Tibial artery (tissue), 4 donors: ENCODE measurements at regions of chr2 and their contacts with region 1.

Region 1: DNA sequence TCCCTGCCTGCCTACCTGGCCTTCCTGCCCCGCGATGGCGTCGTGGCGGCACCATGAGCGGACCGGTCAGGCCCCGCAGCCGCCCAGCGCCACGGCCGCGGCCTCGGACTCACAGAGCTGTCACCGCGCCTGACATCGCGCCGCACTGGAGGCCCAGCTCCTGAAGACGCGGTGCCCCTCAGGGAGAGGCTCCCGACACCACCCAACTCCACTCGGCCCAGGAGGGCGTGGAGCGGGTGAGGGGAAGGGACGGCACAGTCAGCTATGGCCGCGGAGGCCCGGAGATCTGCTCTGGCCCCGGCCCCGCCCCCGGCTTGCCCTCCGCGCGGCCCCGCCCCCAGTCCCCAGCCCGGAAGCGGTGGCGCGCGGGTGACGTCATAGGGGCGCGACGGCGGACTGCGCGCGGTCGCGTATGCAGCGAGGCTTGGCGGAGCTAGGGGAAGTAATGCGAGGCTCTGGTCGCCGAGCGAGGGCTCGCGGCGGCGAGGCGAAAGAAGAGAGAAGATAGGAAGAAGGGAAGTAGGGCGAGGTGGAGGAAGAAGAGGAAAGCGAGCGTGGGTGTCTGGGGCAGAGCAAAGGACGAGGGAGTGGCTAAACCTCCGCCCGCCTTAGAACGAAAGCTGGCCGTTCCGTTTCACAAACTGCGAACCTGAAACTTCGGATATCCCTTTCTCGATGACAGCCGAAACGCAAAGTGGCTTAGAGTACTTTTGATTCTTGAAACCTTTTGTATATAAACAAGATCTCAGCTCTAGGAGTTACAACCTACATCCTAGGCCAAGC is at the start of gene SLC35F5:
- DNase-seq: peak; percentile 88 to 95
- H3K4me3 ChIP-seq: peak within 1 kb of the TSS; percentile 63 to 72
- H3K27ac ChIP-seq: peak within 1 kb of the TSS; percentile 90 to 94
- H3K4me1 ChIP-seq: peaks cover 0 to 42% (median 16%) of the 10 kb centered on the region in 4 donors
- H3K27me3 ChIP-seq: no peaks in the 10 kb centered on the region
- CTCF ChIP-seq: no peak

Region 2: GRCh38 chr2:113692698-113693428 is 63.7 kb before region 1 on chr2:
- intact Hi-C with region 1: no loop called
- DNase-seq: no peak
- H3K4me3 ChIP-seq: no peak overlapping the region
- H3K27ac ChIP-seq: no peak overlapping the region
- H3K4me1 ChIP-seq: no peaks in the 10 kb centered on the region
- H3K27me3 ChIP-seq: no peaks in the 10 kb centered on the region
- CTCF ChIP-seq: no peak

Region 3: GRCh38 chr2:113784823-113785744 is 28.5 kb after region 1 on chr2:
- intact Hi-C with region 1: no loop called
- DNase-seq: no peak
- H3K4me3 ChIP-seq: no peak overlapping the region
- H3K27ac ChIP-seq: no peak overlapping the region
- H3K4me1 ChIP-seq: no peaks in the 10 kb centered on the region
- H3K27me3 ChIP-seq: no peaks in the 10 kb centered on the region
- CTCF ChIP-seq: no peak

Region 4: GRCh38 chr2:113889471-113890252 is 133.1 kb after region 1 on chr2 and contains the start of gene ACTR3:
- intact Hi-C with region 1: loop called (anchors 2 kb)
- DNase-seq: peak; percentile 96 to 99
- H3K4me3 ChIP-seq: peak within 1 kb of the TSS; percentile 97 to 99
- H3K27ac ChIP-seq: peak within 1 kb of the TSS; percentile 99
- H3K4me1 ChIP-seq: peaks cover 0 to 50% (median 34%) of the 10 kb centered on the region in 4 donors
- H3K27me3 ChIP-seq: no peaks in the 10 kb centered on the region
- CTCF ChIP-seq: no peak